ENCODE measurements at regions of chr7 and their contacts with region 1.

Region 1: GRCh38 chr7:55280031-55280454 is 85.1 kb upstream of the LANCL2 start:
- DNase-seq: peak; percentile 76
- CTCF ChIP-seq: peak; percentile 79

Region 2: GRCh38 chr7:54904130-54904529 is 375.9 kb before region 1 on chr7:
- CTCF ChIA-PET with region 1: no interaction called
- POLR2A ChIA-PET with region 1: no interaction called
- DNase-seq: no peak
- CTCF ChIP-seq: no peak

Region 3: GRCh38 chr7:55299273-55299967 is 19.4 kb after region 1 on chr7:
- CTCF ChIA-PET with region 1: interaction called, 12 read pairs
- POLR2A ChIA-PET with region 1: no interaction called
- DNase-seq: no peak
- CTCF ChIP-seq: no peak

Region 4: DNA sequence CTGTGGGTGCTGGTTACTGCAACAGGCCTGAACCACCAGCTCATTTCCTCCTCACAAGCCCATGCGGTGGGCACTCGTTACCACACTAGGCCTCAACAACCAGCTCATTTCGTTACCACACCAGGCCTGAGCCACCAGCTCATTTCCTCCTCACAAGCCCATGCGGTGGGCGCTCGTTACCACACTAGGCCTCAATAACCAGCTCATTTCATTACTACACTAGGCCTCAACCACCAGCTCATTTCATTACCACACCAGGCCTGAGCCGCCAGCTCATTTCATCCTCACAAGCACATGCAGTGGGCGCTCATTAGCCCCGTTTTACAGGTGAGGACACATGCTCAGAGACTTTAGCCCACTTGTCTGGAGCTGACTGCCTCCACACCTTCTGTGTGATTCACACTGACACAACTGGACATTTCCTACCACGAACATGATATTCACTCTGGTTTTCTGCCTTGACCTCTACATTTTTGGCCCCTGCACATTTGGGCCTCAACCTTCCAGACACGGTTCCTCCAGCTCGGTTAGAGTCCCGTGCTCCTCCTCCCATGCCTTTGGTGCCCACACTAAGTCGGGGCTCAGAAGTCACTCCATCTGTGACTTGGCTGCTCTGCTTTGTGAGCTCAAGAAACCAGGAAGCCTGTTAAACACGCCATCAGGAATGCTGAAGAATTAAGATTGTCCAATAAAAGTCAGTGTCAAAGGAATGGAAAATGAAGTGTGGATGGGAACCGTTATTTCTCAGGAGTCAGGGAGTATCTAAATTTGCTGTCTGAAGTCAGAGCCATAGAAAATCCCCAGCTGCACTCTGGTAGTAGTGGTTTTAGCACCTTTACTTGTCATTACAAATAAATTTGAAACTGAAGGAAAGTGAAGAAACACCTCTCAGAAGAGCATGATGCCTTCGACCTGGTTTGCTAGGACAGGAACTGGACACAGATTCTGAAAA is 29.3 kb after region 1 on chr7:
- CTCF ChIA-PET with region 1: interaction called, 36 read pairs
- POLR2A ChIA-PET with region 1: no interaction called
- DNase-seq: peak; percentile 70
- CTCF ChIP-seq: no peak

Region 5: GRCh38 chr7:55335151-55335550 is 55.1 kb after region 1 on chr7:
- CTCF ChIA-PET with region 1: interaction called, 11 read pairs
- POLR2A ChIA-PET with region 1: no interaction called
- DNase-seq: no peak
- CTCF ChIP-seq: no peak

Region 6: DNA sequence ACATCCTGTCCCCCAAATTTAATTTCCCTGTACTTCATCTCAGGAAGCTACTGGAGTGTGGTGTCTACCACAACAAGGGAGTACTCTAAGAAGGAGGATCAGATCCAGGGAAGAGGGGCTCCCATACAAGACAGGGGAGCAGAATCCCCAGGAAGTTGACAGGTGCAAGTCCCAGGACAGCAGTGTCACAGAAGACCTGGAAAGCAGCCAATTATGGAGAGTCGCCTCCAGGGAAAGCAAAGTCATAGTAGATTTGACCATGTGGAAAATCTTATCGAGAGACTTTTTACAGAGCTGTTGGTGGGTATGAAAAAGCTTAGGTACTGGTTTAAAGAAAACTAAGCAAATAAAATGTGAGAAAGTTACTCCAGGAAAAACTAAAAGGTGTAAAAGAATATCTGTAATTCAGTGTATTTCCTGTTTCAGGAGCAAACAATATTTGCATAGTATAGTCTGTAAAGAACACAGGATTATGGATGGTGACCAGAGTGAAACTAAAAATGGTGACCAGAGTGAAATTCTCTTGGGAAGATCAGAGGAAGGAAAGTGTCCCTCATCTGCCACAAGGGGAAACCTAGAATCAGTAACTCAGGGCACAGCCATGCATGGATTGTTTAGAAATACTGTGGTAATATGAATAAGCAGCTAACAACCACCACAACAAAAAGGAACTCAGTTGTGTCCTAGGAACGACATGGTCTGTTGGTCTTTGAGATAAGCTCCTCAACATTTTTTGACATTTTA is 129.6 kb after region 1 on chr7:
- CTCF ChIA-PET with region 1: interaction called, 132 read pairs
- POLR2A ChIA-PET with region 1: no interaction called
- DNase-seq: no peak
- CTCF ChIP-seq: no peak

Region 7: DNA sequence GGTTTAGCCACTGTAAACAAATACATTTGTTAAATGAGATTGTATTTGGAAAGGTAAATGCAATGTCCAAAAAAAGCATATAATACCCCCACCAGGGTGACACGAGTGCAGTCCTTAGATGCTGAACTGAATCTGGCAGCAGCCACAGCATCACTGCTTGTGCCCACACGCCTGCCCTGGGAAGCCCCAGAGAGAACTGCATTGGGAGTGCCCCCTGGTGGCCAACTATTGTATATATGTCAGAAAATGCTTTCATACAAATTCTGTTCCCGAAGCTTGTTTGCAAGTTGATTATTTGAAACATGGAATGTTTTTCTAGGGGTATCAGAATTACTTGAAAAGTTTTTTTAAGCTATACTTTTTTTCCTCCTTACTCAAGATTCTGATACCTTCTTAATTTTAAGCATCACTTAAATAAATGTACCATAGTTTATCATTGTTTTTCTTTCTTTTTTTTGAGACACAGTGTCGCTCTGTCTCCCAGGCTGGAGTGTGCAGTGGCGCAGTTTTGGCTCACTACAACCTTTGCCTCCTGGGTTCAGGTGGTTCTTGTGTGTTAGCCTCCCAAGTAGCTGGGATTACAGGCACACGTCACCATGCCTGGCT is 135.2 kb after region 1 on chr7:
- CTCF ChIA-PET with region 1: interaction called, 132 read pairs
- POLR2A ChIA-PET with region 1: no interaction called
- DNase-seq: peak; percentile 86
- CTCF ChIP-seq: peak; percentile 75

Region 8: DNA sequence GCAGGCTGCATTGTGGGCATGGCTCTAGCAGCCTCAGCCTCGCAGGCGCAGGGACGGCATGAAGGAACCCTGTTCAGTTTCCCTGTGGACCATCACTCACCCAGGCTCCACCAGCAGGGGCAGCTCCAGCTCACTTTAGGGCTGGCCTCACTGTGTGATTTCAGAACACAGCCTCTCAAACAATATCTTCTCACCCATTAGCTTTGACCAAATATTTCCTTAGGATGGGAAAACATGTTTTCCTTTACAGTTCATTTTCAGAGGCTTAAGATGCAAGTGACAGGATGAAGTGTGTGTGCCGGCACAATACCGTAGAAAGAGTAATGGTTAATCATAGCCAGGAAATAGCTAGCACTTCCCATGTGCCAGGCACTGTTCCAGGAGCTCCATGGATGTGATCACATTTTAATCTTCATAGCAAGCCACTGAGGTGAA is 143.3 kb after region 1 on chr7:
- CTCF ChIA-PET with region 1: interaction called, 10 read pairs
- POLR2A ChIA-PET with region 1: no interaction called
- DNase-seq: no peak
- CTCF ChIP-seq: no peak

Measured in GM10248 (cell line).